Calu3 (cell line): ENCODE measurements at regions of chr17 and their contacts with region 1.

Region 1: GRCh38 chr17:10844621-10845387 is 6.9 kb upstream of the PIRT start:
- DNase-seq: peak; percentile 69
- H3K4me3 Mint-ChIP-seq: peak overlapping the region; percentile 78
- H3K27ac Mint-ChIP-seq: no peak overlapping the region
- H3K4me1 Mint-ChIP-seq: peaks cover 20% of the 10 kb centered on the region
- H3K27me3 Mint-ChIP-seq: peaks cover 16% of the 10 kb centered on the region
- CTCF ChIP-seq: peak; percentile 66

Region 2: GRCh38 chr17:10646392-10646990 is 198.3 kb before region 1 on chr17:
- CTCF ChIA-PET with region 1: no interaction called
- intact Hi-C with region 1: loop called (anchors 10 kb)
- DNase-seq: peak; percentile 70
- H3K4me3 Mint-ChIP-seq: no peak overlapping the region
- H3K27ac Mint-ChIP-seq: no peak overlapping the region
- H3K4me1 Mint-ChIP-seq: no peaks in the 10 kb centered on the region
- H3K27me3 Mint-ChIP-seq: no peaks in the 10 kb centered on the region
- CTCF ChIP-seq: peak; percentile 62

Region 3: DNA sequence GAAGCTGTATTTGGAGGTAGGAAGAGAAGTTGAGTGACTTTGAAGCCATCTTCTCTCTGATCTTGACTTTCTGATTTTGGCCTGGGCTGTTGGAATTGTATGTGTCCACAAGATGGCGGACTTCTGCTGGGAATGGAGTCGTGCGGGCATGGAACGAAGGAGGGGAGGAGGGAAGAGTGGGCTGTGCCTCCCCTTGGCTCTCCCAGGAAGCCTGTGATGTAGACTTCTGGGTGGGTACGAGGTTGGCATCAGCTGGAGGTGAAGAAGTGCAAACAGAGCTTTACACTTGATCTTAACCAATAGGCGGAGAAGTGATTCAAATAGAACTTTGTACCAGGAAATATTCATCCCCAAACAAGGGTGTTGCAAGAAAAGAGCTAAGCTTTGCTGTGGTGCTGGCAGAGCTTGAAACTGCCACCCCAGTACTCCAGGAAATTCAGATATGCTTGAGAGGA is 107.6 kb before region 1 on chr17:
- CTCF ChIA-PET with region 1: interaction called, 34 read pairs
- intact Hi-C with region 1: loop called (anchors 1 kb)
- DNase-seq: peak; percentile 72
- H3K4me3 Mint-ChIP-seq: no peak overlapping the region
- H3K27ac Mint-ChIP-seq: no peak overlapping the region
- H3K4me1 Mint-ChIP-seq: peaks cover 14% of the 10 kb centered on the region
- H3K27me3 Mint-ChIP-seq: peaks cover 54% of the 10 kb centered on the region
- CTCF ChIP-seq: peak; percentile 34

Region 4: DNA sequence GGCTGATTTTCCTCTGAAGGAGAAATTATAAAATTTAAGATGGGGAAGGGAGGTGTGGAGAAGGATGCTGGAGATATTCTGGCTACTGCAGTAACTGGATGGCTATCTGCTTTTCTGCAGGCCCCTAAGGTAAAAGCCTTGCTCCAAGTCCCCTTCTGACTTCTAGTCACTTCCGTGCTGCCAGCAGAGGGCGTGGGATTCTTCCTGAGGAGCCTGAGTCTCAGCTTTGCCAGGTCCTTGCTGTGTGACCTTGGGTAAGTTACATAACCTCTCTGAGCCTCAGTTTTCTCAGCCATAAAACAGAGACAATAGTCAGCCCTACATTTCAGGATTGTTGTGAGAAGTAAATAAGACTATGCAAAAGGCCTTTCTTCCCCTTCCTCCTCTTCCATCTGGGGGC is 90.7 kb before region 1 on chr17:
- CTCF ChIA-PET with region 1: interaction called, 4 read pairs
- intact Hi-C with region 1: loop called (anchors 5 kb)
- DNase-seq: peak; percentile 30
- H3K4me3 Mint-ChIP-seq: no peak overlapping the region
- H3K27ac Mint-ChIP-seq: no peak overlapping the region
- H3K4me1 Mint-ChIP-seq: no peaks in the 10 kb centered on the region
- H3K27me3 Mint-ChIP-seq: peaks cover 48% of the 10 kb centered on the region
- CTCF ChIP-seq: peak; percentile 22

Region 5: GRCh38 chr17:10772425-10773380 is 72.1 kb before region 1 on chr17:
- CTCF ChIA-PET with region 1: no interaction called
- intact Hi-C with region 1: loop called (anchors 10 kb)
- DNase-seq: peak; percentile 21
- H3K4me3 Mint-ChIP-seq: no peak overlapping the region
- H3K27ac Mint-ChIP-seq: no peak overlapping the region
- H3K4me1 Mint-ChIP-seq: no peaks in the 10 kb centered on the region
- H3K27me3 Mint-ChIP-seq: no peaks in the 10 kb centered on the region
- CTCF ChIP-seq: peak; percentile 58

Region 6: DNA sequence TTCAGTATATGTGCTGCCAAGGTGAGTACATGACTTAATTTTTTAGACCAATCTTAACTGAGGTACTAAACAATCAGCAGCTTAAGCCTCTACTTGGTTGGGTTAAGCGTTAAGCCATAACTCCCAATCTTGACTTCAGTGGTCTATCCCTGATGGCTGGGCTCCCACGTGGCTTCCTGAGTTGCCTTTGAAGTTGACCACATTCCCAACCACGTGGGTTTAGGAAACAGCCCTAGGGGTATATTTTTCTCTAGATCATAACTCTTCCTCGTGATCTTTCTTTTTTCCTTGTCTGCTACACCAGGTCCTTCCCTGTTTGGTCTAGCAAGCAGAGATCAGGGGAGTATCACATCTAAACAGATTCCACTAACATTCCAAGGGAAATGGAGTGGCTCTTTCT is 13.2 kb after region 1 on chr17:
- CTCF ChIA-PET with region 1: no interaction called
- intact Hi-C with region 1: no loop called
- DNase-seq: no peak
- H3K4me3 Mint-ChIP-seq: no peak overlapping the region
- H3K27ac Mint-ChIP-seq: no peak overlapping the region
- H3K4me1 Mint-ChIP-seq: no peaks in the 10 kb centered on the region
- H3K27me3 Mint-ChIP-seq: peaks cover 5% of the 10 kb centered on the region
- CTCF ChIP-seq: no peak

Region 7: GRCh38 chr17:10875979-10876555 is 31.3 kb after region 1 on chr17:
- CTCF ChIA-PET with region 1: no interaction called
- intact Hi-C with region 1: no loop called
- DNase-seq: peak; percentile 46
- H3K4me3 Mint-ChIP-seq: no peak overlapping the region
- H3K27ac Mint-ChIP-seq: no peak overlapping the region
- H3K4me1 Mint-ChIP-seq: no peaks in the 10 kb centered on the region
- H3K27me3 Mint-ChIP-seq: peaks cover 16% of the 10 kb centered on the region
- CTCF ChIP-seq: peak; percentile 57